Calu3 (cell line): ENCODE measurements at regions of chr18 and their contacts with region 1.

Region 1: GRCh38 chr18:22551536-22552151 is 133.9 kb upstream of the CTAGE1 start:
- DNase-seq: peak; percentile 55
- H3K4me3 Mint-ChIP-seq: no peak overlapping the region
- H3K27ac Mint-ChIP-seq: no peak overlapping the region
- H3K4me1 Mint-ChIP-seq: peaks cover 16% of the 10 kb centered on the region
- H3K27me3 Mint-ChIP-seq: no peaks in the 10 kb centered on the region
- CTCF ChIP-seq: no peak

Region 2: DNA sequence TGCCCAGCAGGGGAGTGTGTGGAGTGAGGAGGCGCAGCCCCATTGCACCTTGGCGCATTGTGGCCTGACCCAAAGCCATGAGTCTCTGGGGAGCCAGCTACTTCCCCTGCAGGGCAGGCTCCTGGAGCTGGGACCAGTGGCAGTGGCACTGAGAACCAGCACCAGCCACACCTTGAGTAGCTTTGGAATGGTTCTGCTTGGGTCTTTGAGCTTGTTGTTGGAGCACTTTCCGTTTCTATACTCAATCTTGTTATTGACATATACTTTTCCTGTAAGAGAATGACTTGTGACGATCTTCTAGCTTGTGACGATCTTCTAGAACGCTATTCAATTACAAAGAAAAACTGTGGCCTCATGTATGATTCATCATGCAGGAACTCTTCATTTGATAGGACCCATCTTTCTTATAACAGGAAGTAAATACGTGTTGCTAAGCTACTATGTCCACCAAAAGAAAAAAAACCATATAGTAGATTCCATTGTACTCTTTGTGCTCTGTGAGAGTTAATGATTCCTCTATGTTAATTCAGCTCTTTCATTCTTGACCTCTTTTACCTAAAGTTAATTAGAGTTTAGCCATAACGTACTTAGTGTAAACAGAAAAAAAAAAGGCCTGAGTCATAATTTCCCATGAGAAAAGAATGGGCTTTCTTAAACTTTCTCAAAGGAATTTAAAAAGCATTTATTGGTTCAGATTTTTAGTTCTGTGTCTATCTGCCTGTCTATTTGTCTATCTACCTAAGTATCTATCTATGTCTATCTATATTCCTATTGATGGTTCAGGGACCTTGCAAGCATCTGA is 269.1 kb before region 1 on chr18:
- CTCF ChIA-PET with region 1: interaction called, 7 read pairs
- intact Hi-C with region 1: loop called (anchors 2 kb)
- DNase-seq: peak; percentile 69
- H3K4me3 Mint-ChIP-seq: peak overlapping the region; percentile 41
- H3K27ac Mint-ChIP-seq: peak overlapping the region; percentile 98
- H3K4me1 Mint-ChIP-seq: peaks cover 70% of the 10 kb centered on the region
- H3K27me3 Mint-ChIP-seq: no peaks in the 10 kb centered on the region
- CTCF ChIP-seq: no peak

Region 3: DNA sequence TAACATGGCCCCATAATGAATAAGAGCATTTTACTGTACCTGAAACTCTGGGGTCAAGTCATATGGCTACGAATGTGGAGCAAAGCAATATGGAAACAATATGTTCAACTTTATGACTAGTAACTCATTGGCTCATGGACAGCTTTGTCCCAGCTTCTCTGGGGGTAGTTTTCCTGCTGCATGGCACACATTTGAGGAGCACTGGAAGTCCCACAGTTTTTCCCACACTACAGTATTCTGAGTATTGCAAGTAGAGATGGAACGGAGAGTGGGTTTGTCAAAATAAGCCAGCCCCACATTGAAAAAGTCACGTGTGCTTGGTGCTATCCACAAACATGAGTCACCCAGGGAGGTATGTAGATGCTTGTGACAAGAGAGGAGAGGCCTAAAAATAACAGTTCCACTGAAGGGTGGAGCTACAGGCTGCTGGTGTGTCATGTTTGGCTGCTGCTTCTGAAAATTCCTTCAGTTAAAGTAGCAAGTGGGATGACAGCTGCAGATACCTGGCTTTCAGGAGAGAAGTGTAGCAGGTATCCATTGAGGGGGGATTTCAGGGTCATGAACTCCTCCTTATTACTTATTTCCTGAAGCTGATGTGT is 85.7 kb before region 1 on chr18:
- CTCF ChIA-PET with region 1: interaction called, 3 read pairs
- intact Hi-C with region 1: loop called (anchors 1 kb)
- DNase-seq: peak; percentile 70
- H3K4me3 Mint-ChIP-seq: peak overlapping the region; percentile 64
- H3K27ac Mint-ChIP-seq: peak overlapping the region; percentile 100
- H3K4me1 Mint-ChIP-seq: peaks cover 70% of the 10 kb centered on the region
- H3K27me3 Mint-ChIP-seq: no peaks in the 10 kb centered on the region
- CTCF ChIP-seq: no peak

Region 4: DNA sequence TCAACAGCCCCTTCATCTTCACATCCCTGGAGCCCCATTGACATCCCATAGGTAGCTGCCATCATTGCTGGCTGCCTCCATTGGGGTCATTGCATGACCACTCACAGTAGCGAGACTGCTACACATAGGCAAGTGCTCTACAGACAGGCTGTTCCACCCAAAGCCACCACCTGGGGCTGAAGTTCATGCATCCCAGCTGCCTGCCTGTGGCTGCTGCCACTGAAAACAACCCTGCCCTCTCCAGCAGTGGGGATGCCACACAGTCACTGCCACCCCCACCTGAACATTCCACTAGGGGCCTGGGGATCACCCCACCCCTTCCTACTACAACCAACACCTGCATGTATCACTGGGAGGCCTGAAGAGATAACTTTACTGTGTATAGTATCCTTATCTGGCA is 74.4 kb before region 1 on chr18:
- CTCF ChIA-PET with region 1: no interaction called
- intact Hi-C with region 1: no loop called
- DNase-seq: no peak
- H3K4me3 Mint-ChIP-seq: no peak overlapping the region
- H3K27ac Mint-ChIP-seq: no peak overlapping the region
- H3K4me1 Mint-ChIP-seq: peaks cover 7% of the 10 kb centered on the region
- H3K27me3 Mint-ChIP-seq: no peaks in the 10 kb centered on the region
- CTCF ChIP-seq: no peak

Region 5: DNA sequence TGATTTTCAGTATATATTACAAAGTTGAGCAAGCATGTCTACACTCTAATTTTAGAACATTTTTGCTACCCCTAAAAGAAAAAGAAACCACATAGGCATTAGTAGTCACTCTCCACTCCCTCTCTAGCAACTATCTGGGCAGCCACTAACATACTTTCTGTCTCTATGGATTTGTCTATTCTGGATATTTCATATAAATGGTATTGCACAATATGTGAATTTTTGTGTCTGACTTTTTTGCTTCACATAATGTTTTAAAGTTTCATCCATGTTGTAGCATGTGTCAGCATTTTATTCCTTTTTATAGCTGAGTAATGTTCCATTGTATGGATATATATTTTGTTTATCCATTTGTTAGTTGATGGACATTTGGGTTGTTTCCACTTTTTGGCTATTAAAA is 98.6 kb after region 1 on chr18:
- CTCF ChIA-PET with region 1: no interaction called
- intact Hi-C with region 1: no loop called
- DNase-seq: no peak
- H3K4me3 Mint-ChIP-seq: no peak overlapping the region
- H3K27ac Mint-ChIP-seq: no peak overlapping the region
- H3K4me1 Mint-ChIP-seq: no peaks in the 10 kb centered on the region
- H3K27me3 Mint-ChIP-seq: no peaks in the 10 kb centered on the region
- CTCF ChIP-seq: no peak

Region 6: GRCh38 chr18:23237524-23238151 is 686.0 kb after region 1 on chr18:
- CTCF ChIA-PET with region 1: no interaction called
- intact Hi-C with region 1: no loop called
- DNase-seq: no peak
- H3K4me3 Mint-ChIP-seq: no peak overlapping the region
- H3K27ac Mint-ChIP-seq: no peak overlapping the region
- H3K4me1 Mint-ChIP-seq: no peaks in the 10 kb centered on the region
- H3K27me3 Mint-ChIP-seq: no peaks in the 10 kb centered on the region
- CTCF ChIP-seq: no peak